A673 (cell line): ENCODE measurements at regions of chr11 and their contacts with region 1.

Region 1: DNA sequence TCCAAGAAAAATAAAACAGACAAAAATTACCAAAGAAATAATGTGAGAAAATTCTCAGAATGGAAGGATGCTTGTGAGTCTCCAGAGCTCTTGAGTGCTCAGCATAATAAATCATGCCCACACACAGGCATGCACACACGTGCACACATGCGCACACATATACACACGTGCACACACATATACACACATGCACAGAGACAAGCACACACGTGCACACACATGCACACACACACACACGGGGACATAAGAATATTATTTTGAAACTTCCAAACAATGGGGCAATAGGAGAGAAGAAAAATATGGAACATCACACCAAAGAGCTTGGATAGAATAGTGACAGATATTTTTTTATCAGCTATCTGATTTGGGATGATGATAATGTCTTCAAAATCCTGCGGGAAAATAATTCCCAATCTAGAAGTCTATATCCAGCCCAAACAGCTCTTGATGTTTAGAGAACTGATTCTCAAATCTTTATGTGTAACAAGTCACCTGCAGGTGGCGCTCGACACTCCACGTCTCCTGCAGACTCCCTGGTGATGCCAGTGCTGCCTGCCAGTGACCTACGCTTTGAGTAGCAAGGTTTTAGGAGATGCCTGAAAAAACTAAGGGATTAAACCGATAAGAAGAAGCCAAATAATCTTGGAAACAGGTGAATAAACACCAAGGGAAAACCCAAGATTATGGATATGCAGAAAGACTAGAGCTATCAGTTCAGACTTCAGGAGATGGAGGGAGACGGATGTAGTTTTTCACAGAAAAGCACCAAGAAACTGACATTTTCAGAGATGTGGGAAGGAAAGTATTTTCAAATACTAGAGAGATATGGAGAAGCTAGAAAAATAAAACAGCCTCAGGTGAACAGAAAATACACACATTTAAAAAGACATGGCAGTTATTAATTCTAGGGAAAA is 743.6 kb downstream of the ETS1 start:
- DNase-seq: peak; percentile 80
- H3K4me3 ChIP-seq: no peak overlapping the region
- H3K27ac ChIP-seq: no peak overlapping the region
- H3K4me1 ChIP-seq: no peaks in the 10 kb centered on the region
- H3K27me3 ChIP-seq: peaks cover 31% of the 10 kb centered on the region
- CTCF ChIP-seq: peak; percentile 90

Region 2: DNA sequence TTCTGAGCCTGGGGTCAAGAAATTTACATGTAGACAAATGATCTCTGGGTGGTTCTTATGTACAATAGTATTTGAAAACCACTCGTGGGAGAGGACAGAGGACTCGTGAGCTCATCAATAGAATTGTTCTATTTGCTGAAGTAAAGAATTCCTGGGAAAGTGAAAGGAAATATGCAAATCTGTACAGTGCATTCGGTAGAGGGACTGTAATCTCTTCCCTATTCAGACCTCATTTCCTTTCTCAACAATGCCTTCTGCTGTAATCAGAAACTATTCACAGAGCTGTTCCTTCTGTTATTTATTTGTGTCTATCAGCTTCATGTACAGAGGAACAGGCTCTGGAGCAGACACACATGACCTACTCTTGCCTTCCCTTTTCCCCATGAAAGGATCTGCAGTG is 133.8 kb before region 1 on chr11:
- CTCF ChIA-PET with region 1: no interaction called
- POLR2A ChIA-PET with region 1: no interaction called
- intact Hi-C with region 1: no loop called
- DNase-seq: no peak
- H3K4me3 ChIP-seq: no peak overlapping the region
- H3K27ac ChIP-seq: no peak overlapping the region
- H3K4me1 ChIP-seq: no peaks in the 10 kb centered on the region
- H3K27me3 ChIP-seq: no peaks in the 10 kb centered on the region
- CTCF ChIP-seq: no peak

Region 3: DNA sequence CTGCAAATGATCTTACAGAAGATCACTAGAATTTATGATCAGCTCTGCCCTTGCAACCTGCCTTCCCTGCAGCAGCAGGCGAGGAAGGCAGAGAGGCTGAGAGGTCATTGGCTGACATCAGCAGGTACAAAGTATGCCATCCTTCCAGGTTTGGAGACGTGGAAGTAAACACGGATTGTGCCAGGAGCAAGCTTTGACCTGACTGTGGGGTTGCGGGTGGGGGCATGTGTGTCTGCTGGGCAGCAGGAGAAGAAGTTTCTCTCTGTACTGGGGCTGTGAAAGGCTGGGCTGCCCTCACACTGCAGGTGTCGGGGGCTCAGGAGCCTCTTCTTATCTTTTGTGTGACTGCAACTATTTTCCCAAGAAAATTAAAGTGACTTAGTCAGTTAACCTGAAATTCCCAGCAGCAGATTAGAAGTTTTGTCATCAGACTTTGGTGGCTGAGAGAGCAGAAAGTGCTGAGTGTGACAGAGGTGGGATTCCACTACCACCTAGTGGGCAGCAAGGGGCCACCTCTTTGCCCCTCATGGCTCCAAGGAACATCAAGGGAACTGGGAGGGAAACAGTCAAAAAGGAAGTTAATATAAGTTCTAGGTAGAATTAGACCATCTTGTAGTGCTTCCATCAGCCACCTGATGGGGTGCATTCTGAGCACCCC is 177.7 kb after region 1 on chr11:
- CTCF ChIA-PET with region 1: no interaction called
- POLR2A ChIA-PET with region 1: no interaction called
- intact Hi-C with region 1: loop called (anchors 2 kb)
- DNase-seq: no peak
- H3K4me3 ChIP-seq: no peak overlapping the region
- H3K27ac ChIP-seq: no peak overlapping the region
- H3K4me1 ChIP-seq: no peaks in the 10 kb centered on the region
- H3K27me3 ChIP-seq: peaks cover 40% of the 10 kb centered on the region
- CTCF ChIP-seq: peak; percentile 48

Region 4: DNA sequence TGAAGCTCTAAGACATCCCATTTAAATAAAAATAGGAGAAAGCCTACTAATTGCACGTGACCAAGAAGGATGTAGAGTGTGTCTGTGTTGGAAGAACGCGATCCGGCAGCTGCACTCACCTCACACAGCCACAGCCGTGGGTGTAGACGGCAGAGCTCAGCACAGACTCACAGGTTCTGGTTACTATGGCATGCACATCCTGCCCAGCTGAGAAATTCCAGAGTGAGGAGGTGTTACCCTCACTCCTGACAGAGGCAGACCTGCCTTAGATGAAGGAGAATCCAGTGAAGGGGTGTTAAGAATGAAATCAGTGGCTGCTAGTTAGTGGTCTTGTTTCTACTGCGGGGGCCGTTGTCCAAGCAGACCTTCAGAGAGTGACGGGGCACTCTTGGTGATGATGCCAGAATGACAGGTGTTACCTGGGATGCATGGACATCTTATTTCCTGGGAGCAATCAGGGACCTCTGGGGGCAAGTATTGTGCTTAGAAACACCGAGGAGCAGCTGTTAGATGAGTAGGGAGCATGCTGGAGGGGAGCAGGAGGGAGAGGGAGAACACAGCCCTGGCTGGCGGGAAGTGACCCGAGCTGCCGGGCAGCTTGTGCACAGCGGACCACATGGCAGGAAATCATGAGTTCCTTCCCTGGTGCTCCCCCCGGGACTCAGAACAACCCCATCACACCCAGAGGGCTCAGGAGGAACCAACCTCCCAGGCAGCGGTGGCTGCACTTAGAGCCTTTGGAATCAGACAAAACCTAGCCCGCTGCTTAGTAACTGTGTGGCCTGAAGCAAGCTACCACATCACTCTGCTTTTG is 1059.7 kb after region 1 on chr11:
- CTCF ChIA-PET with region 1: no interaction called
- POLR2A ChIA-PET with region 1: no interaction called
- intact Hi-C with region 1: no loop called
- DNase-seq: no peak
- H3K4me3 ChIP-seq: no peak overlapping the region
- H3K27ac ChIP-seq: no peak overlapping the region
- H3K4me1 ChIP-seq: peaks cover 6% of the 10 kb centered on the region
- H3K27me3 ChIP-seq: no peaks in the 10 kb centered on the region
- CTCF ChIP-seq: no peak